Dorsolateral prefrontal cortex (tissue), 120 donors: ENCODE measurements at regions of chr5 and their contacts with region 1.

Region 1: GRCh38 chr5:4879693-4880303 is 260.3 kb upstream of the ADAMTS16 start:
- DNase-seq: peak; percentile 65 to 90 (median 86)
- H3K4me3 ChIP-seq: no peak overlapping the region
- H3K27ac ChIP-seq: no peak overlapping the region
- H3K27me3 ChIP-seq: no peaks in the 10 kb centered on the region
- CTCF ChIP-seq: peak; percentile 70 to 98 (median 92)

Region 2: DNA sequence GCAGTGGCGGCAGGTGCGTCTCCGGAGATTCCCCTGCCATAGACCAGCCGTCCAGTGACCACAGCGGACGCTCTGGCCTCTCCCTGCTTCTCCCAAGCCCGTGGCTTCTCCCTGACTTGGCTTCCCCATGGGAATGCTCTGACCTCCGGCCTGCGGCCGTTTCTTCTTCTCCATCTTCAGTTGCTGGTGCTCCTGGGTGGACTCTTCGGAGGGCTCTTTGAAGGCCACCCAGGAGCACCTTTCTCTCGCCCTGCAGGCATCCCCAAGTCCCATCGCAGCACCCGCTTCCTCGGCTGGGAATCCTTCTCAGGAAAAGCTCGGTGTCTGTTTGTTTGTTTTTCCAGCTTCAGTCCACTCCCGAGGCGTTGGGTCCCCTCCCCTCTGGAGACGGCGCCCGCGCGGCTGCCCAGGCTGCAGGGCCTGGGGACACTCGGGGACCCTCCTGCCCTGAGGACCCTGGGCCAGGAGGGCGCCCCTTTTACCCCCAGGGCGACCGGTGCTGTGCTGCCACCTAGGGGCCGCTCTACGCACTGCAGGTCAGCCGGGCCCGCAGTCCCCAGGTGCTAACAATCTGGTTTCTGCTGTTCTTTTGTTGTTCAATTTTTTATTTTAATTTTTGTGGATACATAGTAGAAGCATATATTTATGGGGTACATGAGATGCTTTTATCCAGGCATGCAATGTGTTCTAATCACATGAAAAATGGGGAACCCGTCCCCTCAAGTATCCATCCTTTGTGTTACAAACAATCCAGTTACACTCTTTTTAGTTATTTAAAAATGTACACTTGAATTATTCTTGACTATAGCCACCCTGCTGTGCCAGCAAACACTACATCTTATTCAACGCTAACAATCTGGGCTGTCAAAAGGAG is 62.4 kb after region 1 on chr5:
- intact Hi-C with region 1: loop called (anchors 2 to 5 kb)
- DNase-seq: peak in 2 of 10 donors; percentile 56 to 59
- H3K4me3 ChIP-seq: no peak overlapping the region
- H3K27ac ChIP-seq: no peak overlapping the region
- H3K27me3 ChIP-seq: peaks cover 0 to 11% (median 0%) of the 10 kb centered on the region in 45 donors
- CTCF ChIP-seq: peak; percentile 24 to 90 (median 78)

Region 3: DNA sequence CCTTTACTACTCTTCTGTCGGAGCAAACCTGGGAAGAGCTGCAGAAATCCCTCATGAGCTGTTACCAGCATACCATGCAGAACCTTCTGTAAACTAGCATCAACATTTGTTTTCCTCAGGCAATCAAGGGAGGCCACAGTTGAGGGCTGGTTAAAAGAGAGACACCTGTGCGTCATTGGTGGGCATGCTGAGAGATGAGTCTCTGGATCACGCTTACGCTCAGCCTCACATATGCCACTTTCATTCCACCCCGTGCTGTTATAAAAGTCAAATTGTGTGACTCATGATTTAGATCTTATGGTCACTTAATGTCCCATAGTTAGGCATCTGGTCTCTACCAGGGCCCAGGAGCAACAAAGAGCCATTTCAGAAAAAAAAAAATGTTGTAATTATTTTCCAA is 524.6 kb after region 1 on chr5:
- intact Hi-C with region 1: no loop called
- DNase-seq: no peak
- H3K4me3 ChIP-seq: no peak overlapping the region
- H3K27ac ChIP-seq: no peak overlapping the region
- H3K27me3 ChIP-seq: no peaks in the 10 kb centered on the region
- CTCF ChIP-seq: no peak